ENCODE measurements at regions of chr7 and their contacts with region 1.

Region 1: DNA sequence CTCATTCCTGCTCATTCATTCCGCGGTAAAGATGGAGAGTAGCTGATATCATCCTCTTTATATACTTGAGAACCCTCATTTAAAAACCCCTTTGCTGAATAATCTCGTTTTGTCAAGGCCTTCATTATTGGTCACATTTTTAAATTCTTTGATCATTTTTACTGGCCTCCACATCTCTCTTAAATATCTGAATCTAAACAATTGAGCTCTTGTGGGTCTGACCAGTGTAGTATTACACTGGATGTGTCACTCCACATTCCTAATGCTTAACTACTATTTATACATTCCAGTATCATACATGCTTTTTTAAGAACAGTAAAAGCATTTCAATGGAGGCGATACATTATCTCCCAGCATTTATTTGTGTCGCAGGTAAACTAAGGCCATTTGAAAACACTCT is 12.6 kb upstream of the PRPS1L1 start:
- DNase-seq: no peak
- H3K4me3 ChIP-seq: no peak overlapping the region
- H3K27ac ChIP-seq: no peak overlapping the region
- H3K4me1 ChIP-seq: no peaks in the 10 kb centered on the region
- H3K27me3 ChIP-seq: no peaks in the 10 kb centered on the region
- CTCF ChIP-seq: no peak
- POLR2A ChIP-seq: no peak

Region 2: DNA sequence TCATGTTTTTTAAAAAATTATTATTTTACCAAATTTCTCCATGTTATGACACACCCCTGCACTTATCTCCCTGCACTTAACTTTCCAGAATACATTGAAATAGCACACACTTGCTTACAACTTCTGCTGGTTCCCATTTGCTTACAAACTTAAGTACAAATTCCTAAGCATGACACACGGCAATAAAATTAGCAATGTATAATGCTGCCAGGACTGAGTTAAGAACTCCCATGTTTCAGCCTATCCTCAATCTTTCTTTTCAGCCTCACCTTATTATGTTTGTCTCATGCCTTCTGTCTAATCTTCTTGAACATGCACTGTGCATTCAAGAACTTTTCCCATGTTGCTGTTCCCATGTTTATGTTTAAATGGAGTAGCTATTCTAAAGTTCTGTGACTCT is 53.3 kb before region 1 on chr7:
- intact Hi-C with region 1: loop called (anchors 10 kb)
- DNase-seq: no peak
- H3K4me3 ChIP-seq: no peak overlapping the region
- H3K27ac ChIP-seq: no peak overlapping the region
- H3K4me1 ChIP-seq: no peaks in the 10 kb centered on the region
- H3K27me3 ChIP-seq: no peaks in the 10 kb centered on the region
- CTCF ChIP-seq: no peak
- POLR2A ChIP-seq: no peak

Region 3: GRCh38 chr7:18109762-18110161 is 69.6 kb after region 1 on chr7:
- intact Hi-C with region 1: no loop called
- DNase-seq: no peak
- H3K4me3 ChIP-seq: no peak overlapping the region
- H3K27ac ChIP-seq: no peak overlapping the region
- H3K4me1 ChIP-seq: no peaks in the 10 kb centered on the region
- H3K27me3 ChIP-seq: no peaks in the 10 kb centered on the region
- CTCF ChIP-seq: no peak
- POLR2A ChIP-seq: no peak

Measured in esophagus squamous epithelium (tissue), 5 donors.